ENCODE measurements at regions of chr11 and their contacts with region 1.

Region 1: DNA sequence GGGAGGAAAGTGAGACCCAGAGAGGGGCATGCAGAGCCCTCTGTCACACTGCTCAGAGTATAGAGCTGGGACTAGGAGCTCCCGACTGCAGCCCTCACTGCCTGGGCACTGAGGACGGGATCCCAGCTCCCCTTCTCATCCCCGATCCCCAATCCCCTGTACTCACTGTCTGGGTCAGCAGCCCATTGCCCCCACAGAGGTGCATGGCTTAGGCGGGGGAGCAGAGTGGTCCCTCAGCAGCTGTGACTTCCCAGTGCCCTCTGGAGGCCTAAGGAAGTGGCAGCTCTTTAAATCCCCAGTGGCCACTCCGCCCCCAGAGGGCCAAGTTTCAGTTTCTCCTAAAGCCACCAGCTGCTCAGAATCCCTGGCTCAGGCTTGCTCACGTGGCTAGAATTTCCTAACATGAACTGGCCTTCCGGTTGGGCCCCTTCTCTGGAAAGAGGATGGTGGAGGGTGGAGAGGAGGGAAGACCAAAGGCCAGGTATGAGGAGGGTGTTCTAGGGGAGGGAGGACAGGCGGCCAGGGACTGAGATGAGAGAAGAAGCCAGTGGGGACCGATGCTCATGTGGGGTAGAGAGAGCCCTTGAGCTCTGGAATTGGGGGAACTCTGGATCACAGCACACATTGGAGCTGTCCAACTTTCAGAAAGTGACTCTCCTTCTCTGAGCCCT is at the start of gene BATF2:
- DNase-seq: peak; percentile 55 to 88
- ATAC-seq: peak; percentile 93 to 99
- H3K4me3 ChIP-seq: peak within 1 kb of the TSS; percentile 40 to 83 (median 58)
- H3K27ac ChIP-seq: peak within 1 kb of the TSS; percentile 61 to 86 (median 72)
- H3K4me1 ChIP-seq: peaks cover 9 to 18% of the 10 kb centered on the region in 2 donors
- H3K27me3 ChIP-seq: no peaks in the 10 kb centered on the region
- CTCF ChIP-seq: peak; percentile 15 to 60 (median 39)
- POLR2A ChIP-seq: peak; percentile 36 to 56
- total RNA-seq, gene BATF2: 0.97 to 3.3 (median 2.3) TPM

Region 2: DNA sequence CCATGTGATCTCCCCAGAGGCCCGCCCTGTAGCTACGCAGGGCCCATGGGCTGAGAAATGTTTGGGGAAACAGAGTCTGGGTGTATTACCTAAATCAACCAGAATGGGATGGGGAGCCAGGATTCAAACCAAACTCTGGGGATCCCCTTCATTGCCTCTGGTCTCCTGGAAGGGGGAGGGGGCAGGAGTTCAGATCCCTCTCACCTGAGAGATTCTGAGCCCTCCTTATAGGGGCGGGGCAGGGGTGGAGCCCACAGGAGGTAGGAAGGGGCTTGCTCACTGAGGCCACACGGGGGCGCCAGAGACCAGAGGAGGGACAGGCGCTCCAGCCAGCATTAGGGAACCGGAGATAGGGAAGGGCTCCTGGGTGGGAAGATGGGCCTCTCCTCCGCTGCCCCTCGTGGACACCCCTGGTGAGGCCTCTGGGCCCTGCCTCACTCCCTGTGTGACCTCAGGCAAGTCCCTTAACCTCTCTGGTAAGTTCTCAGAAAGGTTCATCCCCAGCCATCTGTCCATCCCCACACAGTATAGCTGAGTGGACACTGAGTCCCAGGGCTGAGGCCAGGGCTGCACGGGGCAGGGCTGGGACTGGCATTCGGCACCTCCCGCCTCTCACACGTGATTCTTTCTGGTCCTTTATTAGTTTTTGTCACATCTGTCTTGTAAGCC is 149.7 kb before region 1 on chr11:
- in situ Hi-C with region 1: no loop called
- intact Hi-C with region 1: loop called (anchors 5 kb)
- DNase-seq: peak; percentile 78 to 86
- ATAC-seq: peak; percentile 90 to 95
- H3K4me3 ChIP-seq: no peak overlapping the region
- H3K27ac ChIP-seq: peak overlapping the region in 2 of 4 donors; percentile 22 to 34
- H3K4me1 ChIP-seq: peaks cover 33 to 36% of the 10 kb centered on the region in 2 donors
- H3K27me3 ChIP-seq: peaks cover 0 to 3% (median 0%) of the 10 kb centered on the region in 3 donors
- CTCF ChIP-seq: peak; percentile 95 to 99 (median 99)
- POLR2A ChIP-seq: no peak

Region 3: GRCh38 chr11:64916775-64917662 is 79.8 kb before region 1 on chr11 and contains the start of gene ATG2A:
- in situ Hi-C with region 1: no loop called
- intact Hi-C with region 1: loop called (anchors 2 kb)
- DNase-seq: peak; percentile 98 to 99
- ATAC-seq: peak; percentile 99
- H3K4me3 ChIP-seq: peak within 1 kb of the TSS; percentile 80 to 91 (median 90)
- H3K27ac ChIP-seq: peak within 1 kb of the TSS; percentile 84 to 88 (median 86)
- H3K4me1 ChIP-seq: peaks cover 24 to 27% of the 10 kb centered on the region in 2 donors
- H3K27me3 ChIP-seq: no peaks in the 10 kb centered on the region
- CTCF ChIP-seq: no peak
- POLR2A ChIP-seq: peak; percentile 87 to 88
- total RNA-seq, gene ATG2A: 10.7 to 97.5 (median 37.9) TPM

Region 4: DNA sequence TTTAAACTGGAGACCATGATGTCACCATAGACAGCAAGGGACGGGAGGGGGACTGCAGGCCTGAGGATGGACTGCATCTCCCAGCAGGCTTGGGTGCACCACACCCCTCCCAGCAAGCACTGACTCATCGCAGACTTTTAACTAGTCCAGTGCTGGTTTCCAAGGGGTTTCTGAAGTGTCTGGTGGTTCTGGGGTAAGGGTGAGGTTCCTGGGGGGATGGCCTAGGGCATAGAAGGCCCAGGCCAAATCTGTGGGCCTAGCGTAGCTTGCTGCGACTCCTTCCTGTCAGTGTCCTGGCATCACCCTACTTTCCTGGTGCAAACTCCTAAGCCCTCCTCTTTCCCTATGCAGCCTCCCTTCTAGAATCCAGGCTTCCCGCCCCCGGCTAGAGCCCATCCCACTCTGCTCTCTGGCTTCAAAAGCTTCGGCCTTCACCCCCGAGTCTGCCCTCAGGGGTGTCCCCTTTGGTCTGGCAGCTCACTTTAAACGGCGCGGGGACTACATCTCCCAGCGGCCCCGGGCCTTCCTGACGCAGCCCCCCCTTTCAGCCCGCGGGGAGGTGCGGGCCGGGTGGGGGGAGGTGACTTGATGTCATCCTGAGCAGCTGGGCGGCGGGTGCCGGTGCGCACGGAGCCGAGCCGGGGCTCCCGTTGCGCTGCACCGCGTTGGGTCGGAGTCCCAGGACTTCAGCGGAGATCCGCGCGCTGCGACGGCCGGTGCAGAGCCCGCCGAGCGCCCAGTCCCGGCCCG is 72.6 kb before region 1 on chr11 and contains the start of gene PPP2R5B:
- in situ Hi-C with region 1: no loop called
- intact Hi-C with region 1: loop called (anchors 2 kb)
- DNase-seq: peak; percentile 95
- ATAC-seq: peak; percentile 97 to 98
- H3K4me3 ChIP-seq: peak within 1 kb of the TSS; percentile 80 to 100 (median 86)
- H3K27ac ChIP-seq: peak within 1 kb of the TSS; percentile 97 to 100 (median 100)
- H3K4me1 ChIP-seq: peaks cover 21 to 24% of the 10 kb centered on the region in 2 donors
- H3K27me3 ChIP-seq: no peaks in the 10 kb centered on the region
- CTCF ChIP-seq: peak in 1 of 5 experiments; percentile 49
- POLR2A ChIP-seq: peak; percentile 87 to 94
- total RNA-seq, gene PPP2R5B: 17.2 to 34.2 (median 24.3) TPM

Region 5: GRCh38 chr11:65180877-65181568 is 184.2 kb after region 1 on chr11:
- in situ Hi-C with region 1: no loop called
- intact Hi-C with region 1: loop called (anchors 5 kb)
- DNase-seq: peak; percentile 27 to 66
- ATAC-seq: peak; percentile 54 to 55
- H3K4me3 ChIP-seq: peak overlapping the region; percentile 85 to 99 (median 92)
- H3K27ac ChIP-seq: peak overlapping the region; percentile 93 to 99 (median 98)
- H3K4me1 ChIP-seq: peaks cover 18 to 25% of the 10 kb centered on the region in 2 donors
- H3K27me3 ChIP-seq: no peaks in the 10 kb centered on the region
- CTCF ChIP-seq: peak; percentile 52 to 75 (median 73)
- POLR2A ChIP-seq: peak; percentile 76 to 80

Measured in gastrocnemius medialis (tissue), 4 donors.